ENCODE measurements at regions of chr16 and their contacts with region 1.

Region 1: DNA sequence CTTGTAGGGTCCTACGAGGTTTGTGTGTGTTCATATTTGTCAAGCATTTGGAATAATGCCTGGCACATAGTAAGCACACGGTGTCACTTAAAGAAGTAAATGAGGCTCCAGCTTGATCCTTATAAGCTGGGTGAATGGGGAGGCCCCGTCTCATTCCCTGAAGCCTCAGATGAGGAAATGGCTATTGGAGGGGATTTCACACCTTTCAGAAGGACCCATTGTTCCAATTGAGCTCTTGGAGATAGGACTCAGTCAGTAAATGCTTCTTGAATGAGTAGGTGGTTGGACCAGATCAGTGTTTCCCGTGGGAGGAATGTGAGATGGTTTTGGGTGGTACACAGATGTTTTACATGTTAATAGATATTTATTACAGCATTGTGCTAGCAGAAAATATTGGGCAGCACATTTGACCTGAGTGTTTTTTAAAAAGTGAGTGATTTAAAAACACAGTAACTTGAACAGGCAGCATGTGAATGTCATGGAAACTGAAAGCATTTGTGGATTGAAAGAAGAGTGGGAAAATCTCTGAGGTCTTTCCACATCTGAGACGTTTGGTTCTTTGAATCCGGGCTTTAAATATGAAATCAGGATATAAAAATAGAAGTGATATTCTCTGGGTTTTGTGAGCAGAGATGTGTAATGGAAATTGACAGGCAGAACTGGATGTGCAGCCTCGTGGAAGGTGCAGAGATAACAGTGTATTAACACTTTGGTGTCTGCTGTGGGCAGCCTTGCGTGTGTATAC is 36.4 kb upstream of the ARHGAP17 start:
- DNase-seq: no peak
- ATAC-seq: no peak
- H3K4me3 Mint-ChIP-seq: peak overlapping the region; percentile 67
- H3K27ac Mint-ChIP-seq: peak overlapping the region; percentile 73
- H3K4me1 Mint-ChIP-seq: peaks cover 50% of the 10 kb centered on the region
- H3K27me3 Mint-ChIP-seq: no peaks in the 10 kb centered on the region

Region 2: DNA sequence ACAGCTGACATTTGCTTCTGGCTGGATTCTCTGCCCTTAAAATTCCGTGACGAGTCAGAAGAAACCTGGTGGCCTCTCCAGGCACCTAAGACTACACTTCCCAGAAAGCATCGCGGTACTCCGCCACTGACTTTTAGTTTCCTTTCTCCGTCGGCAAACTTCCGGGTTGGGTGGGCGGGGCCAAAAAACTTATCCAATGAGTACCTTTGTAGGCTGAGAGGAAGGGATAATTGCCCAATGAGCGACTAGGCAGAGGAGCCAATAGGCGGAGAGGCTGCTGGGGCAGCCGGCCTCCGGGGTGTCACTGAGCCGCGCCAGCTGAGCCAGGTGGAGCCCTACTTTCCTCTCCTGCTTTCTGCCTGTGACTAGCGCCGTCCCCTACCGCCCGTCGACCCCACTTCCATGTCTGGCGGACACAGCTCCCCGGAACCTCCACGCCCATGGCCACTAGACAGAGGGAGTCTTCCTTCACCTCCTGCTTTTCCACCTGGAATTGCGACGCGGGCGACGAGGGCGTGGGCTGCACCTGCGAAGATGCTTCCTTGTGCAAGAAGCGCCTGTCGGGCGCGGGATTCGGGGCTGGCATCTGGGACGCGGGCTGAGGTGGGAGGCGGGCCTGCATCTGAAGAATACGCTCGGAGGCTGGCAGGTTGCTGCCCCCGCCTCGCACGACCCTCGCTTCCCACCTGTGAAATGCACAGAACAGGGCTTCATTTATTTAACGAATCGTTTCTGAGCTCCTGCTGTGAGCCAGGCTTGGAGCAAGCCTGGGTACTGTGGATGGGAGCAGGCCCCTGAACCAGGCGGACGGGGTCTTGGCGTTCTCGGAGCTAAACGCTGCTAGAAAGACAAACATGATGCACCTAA is 19.9 kb before region 1 on chr16:
- POLR2A ChIA-PET with region 1: interaction called, 63 read pairs
- DNase-seq: peak; percentile 82
- ATAC-seq: peak; percentile 100
- H3K4me3 Mint-ChIP-seq: peak overlapping the region; percentile 96
- H3K27ac Mint-ChIP-seq: peak overlapping the region; percentile 95
- H3K4me1 Mint-ChIP-seq: peaks cover 28% of the 10 kb centered on the region
- H3K27me3 Mint-ChIP-seq: no peaks in the 10 kb centered on the region

Region 3: GRCh38 chr16:25111403-25112166 is 60.0 kb after region 1 on chr16 and contains the start of gene LCMT1:
- POLR2A ChIA-PET with region 1: interaction called, 97 read pairs
- DNase-seq: peak; percentile 86
- ATAC-seq: peak; percentile 92
- H3K4me3 Mint-ChIP-seq: peak within 1 kb of the TSS; percentile 95
- H3K27ac Mint-ChIP-seq: peak within 1 kb of the TSS; percentile 92
- H3K4me1 Mint-ChIP-seq: peaks cover 42% of the 10 kb centered on the region
- H3K27me3 Mint-ChIP-seq: no peaks in the 10 kb centered on the region
- total RNA-seq, gene LCMT1: 37.7 to 42.8 TPM